ENCODE measurements at regions of chr7 and their contacts with region 1.

Region 1: DNA sequence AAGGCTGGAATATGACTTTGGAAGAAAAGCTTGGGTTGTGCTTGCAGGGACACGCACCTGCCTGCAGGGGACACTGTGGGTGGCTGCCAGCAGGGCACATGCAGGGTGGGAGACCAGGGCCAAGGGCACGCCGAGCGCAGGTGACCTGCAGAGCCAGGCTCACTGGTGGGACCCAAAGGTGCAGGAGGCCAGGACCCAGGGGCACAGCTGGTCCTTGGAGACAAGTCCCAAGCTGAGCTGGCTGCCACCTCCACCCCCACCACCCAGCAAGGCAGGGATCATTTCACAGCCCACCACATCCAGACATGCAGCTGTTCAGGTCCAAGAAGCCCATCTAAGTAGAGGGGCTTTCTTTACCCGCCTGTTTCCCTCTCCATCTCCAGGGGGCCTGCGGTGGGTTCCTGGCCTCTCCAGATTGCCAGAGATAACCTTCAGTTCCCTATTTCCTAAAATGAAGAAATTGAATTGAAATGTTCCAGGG is 13.8 kb upstream of the CLIP2 start:
- DNase-seq: no peak
- CTCF ChIP-seq: peak; percentile 58

Region 2: DNA sequence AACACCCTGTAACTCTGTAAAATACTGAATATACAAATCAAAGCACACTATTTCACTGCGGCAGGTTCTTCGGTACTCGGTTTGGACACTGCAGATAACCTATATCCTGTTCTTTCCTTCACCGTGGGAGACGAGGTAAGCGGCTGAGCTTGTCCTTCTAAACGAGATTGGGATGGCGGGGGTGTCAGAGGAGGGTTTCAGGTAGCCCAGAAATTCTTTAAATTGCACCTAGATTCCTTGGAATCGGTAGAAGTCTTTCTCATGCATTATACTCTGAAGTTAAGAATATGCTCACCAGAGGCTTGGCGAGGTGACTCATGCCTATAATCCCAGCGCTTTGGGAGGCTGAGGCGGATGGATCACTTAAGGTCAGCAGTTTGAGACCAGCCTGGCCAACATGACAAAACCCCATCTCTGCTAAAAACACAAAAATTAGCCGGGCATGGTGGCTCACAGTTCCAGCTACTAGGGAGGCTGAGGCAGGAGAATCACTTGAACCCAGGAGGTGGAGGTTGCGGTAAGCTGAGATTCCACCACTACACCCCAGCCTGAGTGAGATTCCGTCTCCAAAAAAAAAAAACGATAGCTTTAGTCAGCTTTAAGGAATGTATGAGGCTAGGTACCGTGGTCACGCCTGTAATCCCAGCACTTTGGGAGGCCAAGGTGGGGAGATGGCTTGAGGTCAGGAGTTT is 75.7 kb before region 1 on chr7:
- CTCF ChIA-PET with region 1: no interaction called
- POLR2A ChIA-PET with region 1: no interaction called
- DNase-seq: no peak
- CTCF ChIP-seq: no peak

Region 3: DNA sequence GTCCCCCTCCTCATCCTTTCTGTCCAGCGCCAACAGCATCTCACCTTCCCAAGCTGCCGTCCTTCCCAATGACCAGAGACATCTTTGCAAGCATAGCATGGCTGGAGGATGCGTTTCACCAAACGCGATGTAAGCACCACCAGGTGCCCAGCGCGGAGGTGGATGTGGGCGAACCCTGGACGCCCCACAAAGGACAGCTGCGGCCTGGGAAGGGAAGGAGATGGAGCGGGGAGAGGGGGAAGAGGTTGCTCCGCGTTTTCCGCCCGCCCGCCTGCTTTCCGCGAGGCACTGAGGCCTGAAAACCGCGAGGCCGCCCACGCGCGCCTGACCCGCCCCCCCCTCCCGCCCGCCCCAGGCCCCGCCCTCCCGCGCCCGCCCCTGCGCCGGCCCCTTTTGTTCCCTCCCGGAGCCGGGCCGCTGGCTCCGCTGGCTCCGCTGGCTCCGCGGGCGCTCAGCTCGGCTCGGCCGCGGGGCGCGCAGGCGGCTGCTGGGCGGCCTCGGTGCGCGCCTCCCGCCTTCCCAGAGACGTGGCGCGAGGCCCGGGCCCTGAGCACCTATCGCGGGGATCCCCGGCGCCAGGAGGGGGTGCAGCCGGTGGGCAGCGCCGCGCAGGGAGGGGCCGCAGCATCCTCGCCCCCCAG is 13.7 kb after region 1 on chr7 and contains the start of gene CLIP2:
- CTCF ChIA-PET with region 1: interaction called, 57 read pairs
- POLR2A ChIA-PET with region 1: interaction called, 3 read pairs
- DNase-seq: peak; percentile 90
- CTCF ChIP-seq: no peak